T-cell (primary cell): ENCODE measurements at regions of chr14 and their contacts with region 1.

Region 1: DNA sequence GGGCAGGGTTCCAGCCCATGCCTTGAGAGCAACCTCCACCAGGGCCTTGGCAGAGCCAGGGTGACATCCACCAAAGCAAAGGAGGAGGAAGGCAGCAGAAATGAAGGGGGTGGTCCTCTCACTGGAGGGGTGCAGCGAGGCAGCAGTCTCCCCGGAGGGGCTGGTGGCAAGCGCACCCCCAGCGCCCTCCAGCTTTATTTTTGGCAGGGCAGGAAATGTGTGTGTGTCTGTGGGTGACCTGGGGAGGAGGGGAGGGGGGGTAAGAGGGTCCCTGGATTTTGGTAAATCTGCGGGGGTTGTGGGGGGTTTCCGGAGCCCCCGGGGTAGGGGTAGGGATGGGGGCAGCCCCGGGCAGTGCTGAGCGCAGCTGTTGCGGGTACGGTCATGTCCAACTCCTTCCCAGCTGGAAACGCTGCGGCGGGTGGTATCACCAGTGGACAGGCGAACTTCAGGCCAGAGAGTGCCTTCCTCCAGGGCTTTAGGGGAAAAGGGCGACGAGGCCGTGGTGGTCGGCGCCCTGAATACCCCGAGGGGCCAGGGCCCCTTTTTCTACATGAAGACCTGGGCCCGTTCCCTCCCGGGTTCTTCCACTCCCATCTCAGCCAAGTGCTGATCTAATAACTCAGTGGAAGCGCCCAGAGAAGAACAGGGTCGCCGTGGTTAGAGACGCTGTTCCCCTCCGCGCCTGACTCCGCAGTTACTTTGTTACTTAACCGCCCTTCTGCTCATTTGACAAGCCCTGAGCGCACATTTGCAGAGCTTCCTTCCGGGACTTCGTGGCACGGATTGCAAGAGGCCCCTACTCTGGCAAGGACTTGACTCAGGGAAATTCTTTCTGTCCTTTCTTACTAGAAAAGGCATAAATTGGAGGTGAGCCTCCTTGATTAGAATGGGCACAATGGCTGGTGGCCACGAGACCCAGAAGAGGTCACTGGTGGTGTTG is 55.2 kb downstream of the FOS start:
- DNase-seq: peak; percentile 50 to 78 (median 64)
- ATAC-seq: peak; percentile 92 to 97 (median 96)
- H3K4me3 ChIP-seq: peak overlapping the region; percentile 58 to 72
- H3K4me3 Mint-ChIP-seq: peak overlapping the region; percentile 79 to 81 (median 81)
- H3K27ac ChIP-seq: peak overlapping the region; percentile 94
- H3K27ac Mint-ChIP-seq: peak overlapping the region; percentile 96 to 99
- H3K4me1 ChIP-seq: peaks cover 8 to 32% of the 10 kb centered on the region in 2 experiments
- H3K4me1 Mint-ChIP-seq: peaks cover 24 to 38% (median 30%) of the 10 kb centered on the region in 3 donors
- H3K27me3 ChIP-seq: peaks cover 0 to 5% of the 10 kb centered on the region in 2 experiments
- H3K27me3 Mint-ChIP-seq: peaks cover 0 to 1% of the 10 kb centered on the region in 2 donors

Region 2: DNA sequence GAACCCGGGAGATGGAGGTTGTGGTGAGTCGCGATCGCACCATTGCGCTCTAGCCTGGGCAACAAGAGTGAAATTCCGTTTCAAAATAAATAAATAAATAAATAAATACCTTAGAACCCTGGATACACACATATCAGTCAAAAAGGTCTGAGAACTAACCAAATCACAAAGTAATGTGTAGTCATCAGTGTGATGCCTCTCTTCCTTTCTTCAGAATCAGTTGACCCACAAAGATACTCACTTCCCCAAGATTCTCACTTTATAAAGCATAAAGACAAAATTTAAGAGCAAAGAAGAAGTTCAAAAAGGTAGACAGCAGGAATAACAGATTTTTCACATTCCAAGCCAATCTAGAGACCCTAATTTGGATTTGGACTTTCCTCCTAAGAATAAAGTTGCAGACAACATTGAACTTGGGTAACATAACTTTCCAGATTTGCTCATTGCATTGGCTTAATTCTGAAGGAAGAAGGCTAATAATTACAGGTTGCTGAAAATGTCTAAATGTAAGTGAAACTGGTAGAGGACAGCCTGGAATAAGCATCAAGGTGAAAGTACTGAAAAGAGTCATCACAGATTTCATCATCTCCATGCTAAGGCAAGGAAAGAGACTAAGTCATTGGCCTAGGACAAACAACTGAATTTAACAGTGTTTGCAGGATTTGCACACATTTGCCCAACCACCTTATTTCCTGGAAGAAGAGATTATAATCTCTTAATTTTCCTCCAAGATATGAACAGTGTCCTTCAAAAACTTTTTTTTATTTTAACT is 174.8 kb before region 1 on chr14:
- CTCF ChIA-PET with region 1: no interaction called
- POLR2A ChIA-PET with region 1: interaction called in 1 of 2 experiments, 14 read pairs
- DNase-seq: no peak
- ATAC-seq: no peak
- H3K4me3 ChIP-seq: no peak overlapping the region
- H3K4me3 Mint-ChIP-seq: no peak overlapping the region
- H3K27ac ChIP-seq: no peak overlapping the region
- H3K27ac Mint-ChIP-seq: peak overlapping the region in 1 of 2 donors; percentile 61
- H3K4me1 ChIP-seq: peaks cover 2 to 16% of the 10 kb centered on the region in 2 experiments
- H3K4me1 Mint-ChIP-seq: peaks cover 57 to 69% (median 68%) of the 10 kb centered on the region in 3 donors
- H3K27me3 ChIP-seq: no peaks in the 10 kb centered on the region
- H3K27me3 Mint-ChIP-seq: no peaks in the 10 kb centered on the region

Region 3: DNA sequence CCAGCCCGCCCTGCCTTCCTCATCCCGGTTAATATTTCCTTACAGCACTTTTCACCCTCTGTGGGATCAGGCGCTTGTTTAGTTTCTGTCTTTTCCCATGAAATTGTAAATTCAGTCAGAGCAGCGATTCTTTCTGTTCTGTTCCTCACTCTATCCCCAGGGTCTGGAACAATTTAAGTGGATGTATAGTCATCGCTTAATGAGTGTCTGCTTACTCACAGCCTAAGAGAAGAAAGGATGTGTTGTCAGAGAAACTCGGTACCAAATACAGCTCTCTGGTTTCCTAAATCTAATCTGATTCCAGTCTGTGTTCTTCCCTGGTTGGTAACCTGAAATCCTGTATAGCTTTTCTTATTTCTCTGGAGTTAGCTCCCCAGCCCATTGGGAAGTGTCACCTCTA is 10.3 kb before region 1 on chr14:
- CTCF ChIA-PET with region 1: interaction called, 3 to 11 read pairs
- POLR2A ChIA-PET with region 1: no interaction called
- DNase-seq: no peak
- ATAC-seq: no peak
- H3K4me3 ChIP-seq: no peak overlapping the region
- H3K4me3 Mint-ChIP-seq: no peak overlapping the region
- H3K27ac ChIP-seq: no peak overlapping the region
- H3K27ac Mint-ChIP-seq: no peak overlapping the region
- H3K4me1 ChIP-seq: no peaks in the 10 kb centered on the region
- H3K4me1 Mint-ChIP-seq: no peaks in the 10 kb centered on the region
- H3K27me3 ChIP-seq: peaks cover 0 to 18% of the 10 kb centered on the region in 2 experiments
- H3K27me3 Mint-ChIP-seq: peaks cover 2 to 4% of the 10 kb centered on the region in 2 donors

Region 4: DNA sequence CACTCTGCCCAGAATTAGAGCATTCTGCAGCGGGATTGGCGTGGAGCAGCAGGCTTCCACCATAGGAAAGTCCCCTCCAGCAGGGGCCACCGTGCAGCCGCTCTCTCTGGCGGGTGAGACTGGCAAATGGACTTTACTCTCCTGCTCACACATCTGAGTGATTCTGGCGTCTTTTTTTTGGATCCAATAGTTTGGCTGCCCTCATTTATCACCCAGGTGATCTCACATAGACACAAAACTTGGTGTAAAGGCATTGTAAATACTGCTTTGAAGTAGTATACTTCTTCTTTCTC is 517.6 kb after region 1 on chr14:
- CTCF ChIA-PET with region 1: no interaction called
- POLR2A ChIA-PET with region 1: no interaction called
- DNase-seq: no peak
- ATAC-seq: no peak
- H3K4me3 ChIP-seq: no peak overlapping the region
- H3K4me3 Mint-ChIP-seq: no peak overlapping the region
- H3K27ac ChIP-seq: no peak overlapping the region
- H3K27ac Mint-ChIP-seq: no peak overlapping the region
- H3K4me1 ChIP-seq: no peaks in the 10 kb centered on the region
- H3K4me1 Mint-ChIP-seq: no peaks in the 10 kb centered on the region
- H3K27me3 ChIP-seq: no peaks in the 10 kb centered on the region
- H3K27me3 Mint-ChIP-seq: no peaks in the 10 kb centered on the region